Activated B cell treated with CpG ODN at 0.5 μM for 24 hours (primary cell): ENCODE measurements at regions of chr21 and their contacts with region 1.

Region 1: DNA sequence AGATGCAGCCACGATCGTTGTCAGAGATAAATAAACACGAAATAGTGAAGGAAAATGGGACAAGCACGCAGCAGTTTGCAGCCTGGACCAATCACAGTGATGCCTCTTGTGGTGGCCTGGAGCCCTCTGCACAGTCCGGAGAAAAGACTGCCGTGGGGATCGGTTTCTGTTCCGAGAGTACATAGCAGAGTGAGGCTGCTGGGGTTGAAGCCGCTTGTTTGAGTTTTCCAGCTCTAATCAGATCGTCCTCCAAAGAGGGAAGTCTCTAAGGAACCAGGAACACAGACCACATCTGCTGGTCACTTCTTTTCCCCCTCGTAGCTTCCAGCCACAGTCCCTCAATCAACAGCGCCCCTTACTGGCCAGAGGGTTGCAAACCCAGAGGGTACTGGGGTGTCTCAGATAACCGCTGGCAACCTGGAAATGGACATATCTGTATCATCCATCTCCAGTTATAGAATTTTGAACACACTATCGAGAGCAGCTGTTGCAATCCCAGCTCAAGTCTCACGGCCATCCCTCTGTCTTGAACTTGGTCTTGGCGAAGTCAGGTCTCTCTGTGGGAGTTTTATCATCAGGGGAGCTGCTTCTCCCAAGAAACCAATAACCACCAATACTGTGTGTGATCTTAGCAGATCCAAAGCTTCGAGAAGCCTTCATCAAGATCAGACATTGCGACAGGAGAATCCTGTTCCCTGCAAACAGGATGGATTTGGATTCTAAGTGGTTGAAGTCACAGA is 57.4 kb downstream of the OLIG1 start:
- DNase-seq: no peak
- ATAC-seq: no peak
- H3K4me3 Mint-ChIP-seq: peak overlapping the region; percentile 42
- H3K27ac Mint-ChIP-seq: no peak overlapping the region
- H3K4me1 Mint-ChIP-seq: peaks cover 6% of the 10 kb centered on the region
- H3K27me3 Mint-ChIP-seq: peaks cover 38% of the 10 kb centered on the region
- CTCF ChIP-seq: no peak

Region 2: DNA sequence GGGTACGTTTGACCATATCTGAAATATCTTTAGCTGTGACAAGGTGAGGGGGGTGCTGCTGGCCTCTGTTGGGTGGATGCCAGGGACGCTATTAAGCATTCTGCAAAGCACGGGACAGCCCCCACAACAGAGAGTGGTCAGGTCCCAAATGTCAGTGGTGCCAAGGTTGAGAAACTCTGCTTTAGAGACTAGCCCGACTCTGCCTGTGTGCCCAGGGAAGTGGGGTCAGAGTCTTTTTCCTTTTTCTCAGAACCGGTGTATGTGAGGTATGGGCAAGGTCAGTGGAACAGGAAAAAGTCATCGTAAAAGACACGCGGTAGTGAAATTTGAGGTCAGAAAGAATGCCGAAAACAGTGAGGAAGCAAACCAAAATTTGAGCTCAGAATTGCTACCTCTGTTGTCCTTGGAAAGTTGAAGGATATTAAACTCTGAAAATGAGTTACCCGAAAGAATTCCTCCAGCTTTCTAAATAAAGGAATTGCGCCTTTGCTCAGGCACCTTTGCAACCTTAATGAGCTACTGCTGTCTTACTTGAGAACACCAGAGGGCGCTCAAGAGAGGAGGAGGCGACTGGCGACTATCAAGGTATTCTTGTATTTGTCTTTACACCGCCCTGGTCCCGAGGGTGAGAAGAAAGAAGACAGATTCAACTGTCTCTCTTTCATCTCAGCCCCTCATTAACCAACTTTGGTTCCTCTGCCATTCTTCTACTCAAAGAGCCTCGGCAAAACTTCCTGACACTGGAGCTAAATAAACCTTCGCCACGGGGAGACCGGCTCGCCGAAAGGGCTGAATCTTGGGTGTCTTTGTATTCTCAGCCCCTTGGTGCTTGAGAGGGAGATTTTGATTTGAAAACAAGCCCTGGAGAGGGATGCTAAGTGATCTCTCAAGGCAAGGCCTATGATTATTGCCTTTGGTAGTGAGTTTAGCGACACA is 187.0 kb before region 1 on chr21:
- CTCF ChIA-PET with region 1: no interaction called
- POLR2A ChIA-PET with region 1: no interaction called
- intact Hi-C with region 1: loop called (anchors 5 kb)
- DNase-seq: no peak
- ATAC-seq: no peak
- H3K4me3 Mint-ChIP-seq: no peak overlapping the region
- H3K27ac Mint-ChIP-seq: no peak overlapping the region
- H3K4me1 Mint-ChIP-seq: no peaks in the 10 kb centered on the region
- H3K27me3 Mint-ChIP-seq: peaks cover 9% of the 10 kb centered on the region
- CTCF ChIP-seq: no peak

Region 3: GRCh38 chr21:33238565-33239255 is 111.4 kb after region 1 on chr21:
- CTCF ChIA-PET with region 1: no interaction called
- POLR2A ChIA-PET with region 1: no interaction called
- intact Hi-C with region 1: no loop called
- DNase-seq: no peak
- ATAC-seq: peak; percentile 71
- H3K4me3 Mint-ChIP-seq: peak overlapping the region; percentile 66
- H3K27ac Mint-ChIP-seq: peak overlapping the region; percentile 89
- H3K4me1 Mint-ChIP-seq: peaks cover 57% of the 10 kb centered on the region
- H3K27me3 Mint-ChIP-seq: no peaks in the 10 kb centered on the region
- CTCF ChIP-seq: no peak